Prostate gland (tissue), 2 donors: ENCODE measurements at regions of chr11 and their contacts with region 1.

Region 1: DNA sequence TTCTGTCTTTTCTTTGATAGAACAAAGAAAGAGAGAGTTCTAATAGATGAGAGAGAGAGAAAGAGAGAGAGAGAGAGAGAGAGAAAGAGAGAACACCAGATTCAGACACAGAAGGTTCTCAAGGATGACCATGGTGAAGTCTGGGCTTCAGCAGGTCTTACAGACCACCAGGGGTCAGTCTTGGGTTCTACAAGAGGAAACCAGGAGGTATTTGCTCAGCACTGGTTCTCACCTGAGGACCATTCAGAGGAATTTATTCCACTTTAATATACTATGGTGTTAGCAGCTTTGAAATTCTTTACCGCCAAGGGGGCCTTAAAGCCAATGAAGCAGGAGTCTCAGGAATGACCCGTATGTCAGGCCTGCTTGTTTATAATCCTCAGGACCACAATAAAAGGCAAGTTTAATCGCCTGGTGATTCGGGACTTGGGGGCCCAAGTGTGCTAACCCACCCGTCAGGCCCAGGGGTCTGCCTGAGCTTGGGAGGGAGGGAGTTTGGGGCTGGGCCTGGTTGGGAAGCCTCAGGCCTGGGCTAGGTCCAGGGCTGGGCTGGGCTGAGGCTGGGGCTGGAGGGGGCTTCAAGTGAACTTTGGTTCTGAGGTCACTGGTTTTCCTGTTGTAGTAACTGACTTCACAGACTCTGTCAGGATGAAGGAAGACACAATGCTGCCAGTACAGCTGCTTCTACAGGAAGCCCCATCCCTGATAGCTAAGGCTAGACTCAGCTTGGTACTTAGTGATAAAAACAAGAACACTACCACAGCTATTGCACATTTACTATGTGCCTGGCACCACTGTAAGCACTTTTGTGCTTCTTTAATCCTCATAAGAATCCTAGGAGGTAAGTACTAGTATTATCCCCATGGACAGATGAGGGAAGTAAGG is 179.2 kb upstream of the ZBED5 start:
- DNase-seq: peak; percentile 77
- H3K4me3 ChIP-seq: no peak overlapping the region
- H3K27ac ChIP-seq: peak overlapping the region in 1 of 2 donors; percentile 21
- H3K4me1 ChIP-seq: peaks cover 3% of the 10 kb centered on the region
- H3K27me3 ChIP-seq: no peaks in the 10 kb centered on the region
- CTCF ChIP-seq: peak; percentile 45 to 88 (median 73)
- POLR2A ChIP-seq: no peak

Region 2: GRCh38 chr11:10490398-10491241 is 546.5 kb before region 1 on chr11:
- intact Hi-C with region 1: no loop called
- DNase-seq: no peak
- H3K4me3 ChIP-seq: no peak overlapping the region
- H3K27ac ChIP-seq: peak overlapping the region in 1 of 2 donors; percentile 24
- H3K4me1 ChIP-seq: no peaks in the 10 kb centered on the region
- H3K27me3 ChIP-seq: no peaks in the 10 kb centered on the region
- CTCF ChIP-seq: no peak
- POLR2A ChIP-seq: no peak

Region 3: DNA sequence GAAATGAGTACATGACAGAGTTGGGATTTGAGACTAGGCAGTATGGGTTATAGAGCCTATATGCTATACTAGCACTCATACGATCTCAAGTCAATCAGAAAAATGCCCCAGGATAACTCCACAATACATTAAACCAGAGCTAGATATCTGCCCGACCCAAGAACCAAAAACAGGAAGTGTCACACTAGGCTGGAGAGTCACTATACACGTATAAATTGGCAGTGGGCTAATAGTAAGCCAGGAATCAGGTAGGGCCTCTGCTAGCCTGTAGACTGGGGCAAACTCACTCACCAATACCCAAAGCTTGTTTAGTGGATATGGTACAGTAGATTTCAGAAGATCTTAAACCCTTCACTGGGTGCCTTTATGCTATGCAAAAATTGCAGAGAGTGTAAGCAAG is 212.2 kb before region 1 on chr11:
- intact Hi-C with region 1: no loop called
- DNase-seq: no peak
- H3K4me3 ChIP-seq: no peak overlapping the region
- H3K27ac ChIP-seq: no peak overlapping the region
- H3K4me1 ChIP-seq: no peaks in the 10 kb centered on the region
- H3K27me3 ChIP-seq: no peaks in the 10 kb centered on the region
- CTCF ChIP-seq: no peak
- POLR2A ChIP-seq: no peak

Region 4: GRCh38 chr11:11157185-11157584 is 120.1 kb after region 1 on chr11:
- intact Hi-C with region 1: loop called (anchors 5 kb)
- DNase-seq: no peak
- H3K4me3 ChIP-seq: no peak overlapping the region
- H3K27ac ChIP-seq: no peak overlapping the region
- H3K4me1 ChIP-seq: no peaks in the 10 kb centered on the region
- H3K27me3 ChIP-seq: no peaks in the 10 kb centered on the region
- CTCF ChIP-seq: peak in 3 of 4 experiments; percentile 35 to 50 (median 37)
- POLR2A ChIP-seq: no peak

Region 5: GRCh38 chr11:11265994-11266606 is 229.0 kb after region 1 on chr11:
- intact Hi-C with region 1: loop called (anchors 5 kb)
- DNase-seq: peak; percentile 19
- H3K4me3 ChIP-seq: no peak overlapping the region
- H3K27ac ChIP-seq: no peak overlapping the region
- H3K4me1 ChIP-seq: no peaks in the 10 kb centered on the region
- H3K27me3 ChIP-seq: no peaks in the 10 kb centered on the region
- CTCF ChIP-seq: peak; percentile 62 to 71 (median 66)
- POLR2A ChIP-seq: no peak

Region 6: DNA sequence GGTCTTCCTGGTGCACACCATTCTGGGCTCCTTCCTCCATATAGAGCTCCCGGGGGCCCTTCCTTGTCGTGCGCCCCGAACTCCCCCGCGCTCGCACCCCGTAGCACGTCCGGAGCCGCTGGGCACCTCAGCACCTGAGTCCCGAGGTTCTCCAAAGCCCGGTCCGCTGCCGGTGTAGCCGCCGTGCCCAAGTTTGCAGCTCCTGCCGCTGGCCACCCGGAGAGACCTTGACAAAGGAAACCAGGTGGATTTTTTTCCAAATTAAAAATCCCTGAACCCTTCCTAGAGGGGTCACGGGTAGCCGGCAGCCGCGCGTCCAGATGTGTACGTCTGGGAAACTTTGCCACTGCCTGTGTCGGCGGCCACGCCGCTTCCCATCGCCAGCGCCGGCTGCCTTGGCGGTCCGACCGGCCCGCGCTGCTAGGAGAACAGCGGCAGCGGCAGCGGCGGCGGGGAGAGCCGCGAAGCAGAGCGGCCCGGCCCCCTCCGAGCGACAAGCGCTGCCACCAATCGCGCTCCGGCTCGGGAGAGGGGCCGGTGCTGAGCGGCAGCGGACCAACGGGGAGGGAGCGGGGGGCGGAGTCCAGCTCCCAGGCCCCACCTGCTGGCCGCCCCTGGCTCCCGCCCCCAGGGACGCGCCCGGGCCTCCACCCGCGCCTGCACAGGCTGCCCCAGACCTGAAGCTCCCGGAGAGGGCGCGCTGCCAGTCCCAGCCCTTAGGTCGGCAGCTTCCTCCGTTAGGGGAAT is 584.7 kb after region 1 on chr11 and contains the start of gene GALNT18:
- intact Hi-C with region 1: loop called (anchors 10 kb)
- DNase-seq: peak; percentile 95
- H3K4me3 ChIP-seq: peak within 1 kb of the TSS; percentile 43 to 49
- H3K27ac ChIP-seq: peak within 1 kb of the TSS; percentile 73 to 78
- H3K4me1 ChIP-seq: peaks cover 8% of the 10 kb centered on the region
- H3K27me3 ChIP-seq: no peaks in the 10 kb centered on the region
- CTCF ChIP-seq: peak; percentile 39 to 77 (median 65)
- POLR2A ChIP-seq: peak; percentile 88
- total RNA-seq, gene GALNT18: 29.4 to 105 TPM

Region 7: DNA sequence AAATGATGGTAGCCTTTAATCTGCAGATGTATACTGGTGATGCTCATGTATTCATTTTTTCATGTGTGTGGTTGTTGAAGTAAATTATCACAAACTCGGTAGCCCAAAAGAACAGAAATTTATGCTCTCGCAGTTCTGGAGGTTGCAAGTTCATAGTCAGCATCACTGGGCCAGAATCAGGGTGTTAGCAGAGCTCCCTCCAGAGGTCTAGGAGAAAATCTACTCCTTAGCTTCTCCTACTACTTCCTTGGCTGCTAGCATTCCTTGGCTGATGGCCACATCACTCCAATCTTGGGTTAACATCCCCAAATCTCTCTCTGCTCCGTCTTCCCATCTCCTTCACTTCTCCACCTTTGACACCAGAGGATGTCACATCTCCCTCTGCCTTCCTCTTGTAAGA is 630.0 kb after region 1 on chr11:
- intact Hi-C with region 1: no loop called
- DNase-seq: no peak
- H3K4me3 ChIP-seq: no peak overlapping the region
- H3K27ac ChIP-seq: no peak overlapping the region
- H3K4me1 ChIP-seq: no peaks in the 10 kb centered on the region
- H3K27me3 ChIP-seq: no peaks in the 10 kb centered on the region
- CTCF ChIP-seq: no peak
- POLR2A ChIP-seq: no peak